ENCODE measurements at regions of chr6 and their contacts with region 1.

Region 1: GRCh38 chr6:85678602-85679444 is 36.1 kb upstream of the SYNCRIP start:
- DNase-seq: peak; percentile 98 to 99
- ATAC-seq: peak; percentile 99
- H3K4me3 ChIP-seq: peak overlapping the region; percentile 88 to 97
- H3K27ac ChIP-seq: peak overlapping the region; percentile 53 to 85
- H3K4me1 ChIP-seq: peaks cover 6 to 9% of the 10 kb centered on the region in 2 donors
- H3K27me3 ChIP-seq: peaks cover 0 to 2% of the 10 kb centered on the region in 2 donors

Region 2: GRCh38 chr6:85360794-85361642 is 317.8 kb before region 1 on chr6:
- intact Hi-C with region 1: loop called in 1 of 2 experiments (anchors 5 kb)
- DNase-seq: no peak
- ATAC-seq: peak; percentile 76
- H3K4me3 ChIP-seq: no peak overlapping the region
- H3K27ac ChIP-seq: peak overlapping the region; percentile 70 to 82
- H3K4me1 ChIP-seq: peaks cover 0 to 3% of the 10 kb centered on the region in 2 donors
- H3K27me3 ChIP-seq: no peaks in the 10 kb centered on the region

Region 3: DNA sequence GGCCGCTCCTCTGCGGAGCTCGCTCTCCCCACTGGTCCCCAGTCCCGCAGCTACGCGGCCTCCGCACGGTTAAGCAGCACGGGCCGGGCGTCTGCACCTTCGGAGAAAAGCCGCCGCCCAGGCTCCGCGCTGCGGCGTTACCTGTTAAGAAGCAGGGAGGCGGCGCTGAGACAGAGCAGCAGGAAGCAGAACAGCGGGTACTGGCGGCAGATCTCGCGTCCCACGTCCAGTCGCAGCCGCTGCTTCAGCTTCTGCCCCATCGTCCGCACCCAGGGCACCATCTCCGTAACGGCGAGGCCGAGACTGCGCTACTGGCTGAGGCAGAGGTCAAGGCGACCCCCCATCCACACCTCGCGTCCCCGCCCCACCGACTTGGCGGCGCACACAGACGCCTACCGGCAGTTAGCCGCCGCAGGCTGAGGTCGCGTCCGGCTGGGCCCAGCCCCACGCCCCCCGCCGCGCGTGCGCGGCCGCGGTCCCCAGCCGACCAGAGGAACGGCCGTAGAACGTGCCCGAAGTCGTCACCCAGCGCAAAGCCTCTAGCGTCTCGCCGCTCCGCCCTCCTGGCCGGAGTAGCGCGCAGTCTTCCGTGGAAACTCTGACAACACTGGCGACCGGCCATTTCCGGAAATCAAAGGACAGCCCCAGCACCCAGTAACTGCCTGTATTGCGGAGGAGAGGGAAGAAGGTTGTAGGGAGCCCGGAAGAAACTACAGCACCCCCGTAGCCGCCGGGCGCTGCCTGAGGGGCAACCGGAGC is 85.2 kb before region 1 on chr6 and contains the start of gene SNX14:
- intact Hi-C with region 1: loop called in 1 of 2 experiments (anchors 5 kb)
- DNase-seq: peak; percentile 98 to 99
- ATAC-seq: peak; percentile 99
- H3K4me3 ChIP-seq: peak within 1 kb of the TSS; percentile 74 to 83
- H3K27ac ChIP-seq: peak within 1 kb of the TSS; percentile 92 to 98
- H3K4me1 ChIP-seq: peaks cover 0 to 2% of the 10 kb centered on the region in 2 donors
- H3K27me3 ChIP-seq: no peaks in the 10 kb centered on the region
- total RNA-seq, gene SNX14: 82.3 to 85.1 TPM

Region 4: GRCh38 chr6:85642774-85643536 is 35.9 kb before region 1 on chr6 and contains the start of gene SYNCRIP:
- intact Hi-C with region 1: loop called (anchors 1 to 2 kb)
- DNase-seq: peak; percentile 99 to 100
- ATAC-seq: peak; percentile 96
- H3K4me3 ChIP-seq: peak within 1 kb of the TSS; percentile 76 to 81
- H3K27ac ChIP-seq: peak within 1 kb of the TSS; percentile 94 to 99
- H3K4me1 ChIP-seq: no peaks in the 10 kb centered on the region
- H3K27me3 ChIP-seq: no peaks in the 10 kb centered on the region
- total RNA-seq, gene SYNCRIP: 96.4 to 119 TPM